Gastrocnemius medialis (tissue), 4 donors: ENCODE measurements at regions of chr2 and their contacts with region 1.

Region 1: GRCh38 chr2:127591221-127591923 is 54.6 kb upstream of the GPR17 start:
- DNase-seq: peak in 1 of 2 donors; percentile 28
- ATAC-seq: peak; percentile 71 to 78
- H3K4me3 ChIP-seq: no peak overlapping the region
- H3K27ac ChIP-seq: no peak overlapping the region
- H3K4me1 ChIP-seq: no peaks in the 10 kb centered on the region
- H3K27me3 ChIP-seq: no peaks in the 10 kb centered on the region
- CTCF ChIP-seq: peak; percentile 71 to 95 (median 74)
- POLR2A ChIP-seq: no peak

Region 2: GRCh38 chr2:127106951-127107621 is 484.3 kb before region 1 on chr2 and contains the start of gene BIN1:
- in situ Hi-C with region 1: no loop called
- intact Hi-C with region 1: no loop called
- DNase-seq: peak; percentile 87 to 96
- ATAC-seq: peak; percentile 56 to 60
- H3K4me3 ChIP-seq: peak within 1 kb of the TSS; percentile 81 to 95 (median 90)
- H3K27ac ChIP-seq: peak within 1 kb of the TSS; percentile 97 to 100 (median 100)
- H3K4me1 ChIP-seq: peaks cover 26 to 44% of the 10 kb centered on the region in 2 donors
- H3K27me3 ChIP-seq: no peaks in the 10 kb centered on the region
- CTCF ChIP-seq: peak in 2 of 5 experiments; percentile 3 to 10
- POLR2A ChIP-seq: peak; percentile 99
- total RNA-seq, gene BIN1: 1,150 to 2,167 (median 1,736) TPM

Region 3: DNA sequence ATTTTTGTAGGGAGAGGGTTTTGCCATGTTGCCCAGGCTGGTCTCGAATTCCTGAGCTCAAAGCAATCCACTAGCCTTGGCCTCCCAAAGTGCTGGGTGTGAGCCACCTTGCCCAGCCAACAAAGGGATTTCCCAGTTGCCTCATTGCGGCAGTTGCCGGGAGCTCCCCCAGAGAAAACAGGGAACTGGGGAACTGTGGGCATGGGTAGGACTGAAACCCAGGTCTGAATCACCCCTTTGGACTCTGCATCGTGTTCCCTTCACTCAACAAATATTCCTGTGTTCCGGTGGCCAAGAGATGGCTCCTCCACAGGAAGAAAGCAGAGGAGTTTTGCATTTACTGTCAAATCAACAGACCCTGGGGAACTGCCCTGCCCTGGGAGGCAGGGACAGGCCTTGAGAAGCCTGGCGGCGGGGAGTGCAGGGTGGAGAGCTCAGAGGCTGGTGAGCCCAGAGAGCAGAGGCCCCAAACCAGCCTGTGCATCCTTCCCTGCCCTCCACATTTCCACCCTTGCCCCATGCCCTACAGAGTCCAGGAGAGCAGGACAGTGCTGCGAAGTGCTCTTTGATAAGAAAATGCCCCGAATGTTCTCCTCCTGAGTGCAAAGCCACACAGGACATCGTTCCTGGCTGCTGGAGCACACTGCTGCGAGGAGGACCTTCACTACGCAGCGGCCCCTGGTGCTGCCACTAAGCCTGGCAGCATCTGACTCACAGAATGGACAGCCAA is 31.0 kb before region 1 on chr2:
- in situ Hi-C with region 1: no loop called
- intact Hi-C with region 1: no loop called
- DNase-seq: no peak
- ATAC-seq: peak; percentile 62 to 65
- H3K4me3 ChIP-seq: no peak overlapping the region
- H3K27ac ChIP-seq: no peak overlapping the region
- H3K4me1 ChIP-seq: peaks cover 0 to 7% of the 10 kb centered on the region in 2 donors
- H3K27me3 ChIP-seq: no peaks in the 10 kb centered on the region
- CTCF ChIP-seq: peak in 1 of 5 experiments; percentile 31
- POLR2A ChIP-seq: no peak

Region 4: GRCh38 chr2:127649684-127650040 is 58.3 kb after region 1 on chr2:
- in situ Hi-C with region 1: no loop called
- intact Hi-C with region 1: loop called (anchors 2 kb)
- DNase-seq: peak; percentile 66 to 67
- ATAC-seq: peak; percentile 81 to 91
- H3K4me3 ChIP-seq: no peak overlapping the region
- H3K27ac ChIP-seq: peak overlapping the region; percentile 29 to 67 (median 59)
- H3K4me1 ChIP-seq: peaks cover 15 to 28% of the 10 kb centered on the region in 2 donors
- H3K27me3 ChIP-seq: no peaks in the 10 kb centered on the region
- CTCF ChIP-seq: peak; percentile 62 to 88 (median 82)
- POLR2A ChIP-seq: no peak

Region 5: DNA sequence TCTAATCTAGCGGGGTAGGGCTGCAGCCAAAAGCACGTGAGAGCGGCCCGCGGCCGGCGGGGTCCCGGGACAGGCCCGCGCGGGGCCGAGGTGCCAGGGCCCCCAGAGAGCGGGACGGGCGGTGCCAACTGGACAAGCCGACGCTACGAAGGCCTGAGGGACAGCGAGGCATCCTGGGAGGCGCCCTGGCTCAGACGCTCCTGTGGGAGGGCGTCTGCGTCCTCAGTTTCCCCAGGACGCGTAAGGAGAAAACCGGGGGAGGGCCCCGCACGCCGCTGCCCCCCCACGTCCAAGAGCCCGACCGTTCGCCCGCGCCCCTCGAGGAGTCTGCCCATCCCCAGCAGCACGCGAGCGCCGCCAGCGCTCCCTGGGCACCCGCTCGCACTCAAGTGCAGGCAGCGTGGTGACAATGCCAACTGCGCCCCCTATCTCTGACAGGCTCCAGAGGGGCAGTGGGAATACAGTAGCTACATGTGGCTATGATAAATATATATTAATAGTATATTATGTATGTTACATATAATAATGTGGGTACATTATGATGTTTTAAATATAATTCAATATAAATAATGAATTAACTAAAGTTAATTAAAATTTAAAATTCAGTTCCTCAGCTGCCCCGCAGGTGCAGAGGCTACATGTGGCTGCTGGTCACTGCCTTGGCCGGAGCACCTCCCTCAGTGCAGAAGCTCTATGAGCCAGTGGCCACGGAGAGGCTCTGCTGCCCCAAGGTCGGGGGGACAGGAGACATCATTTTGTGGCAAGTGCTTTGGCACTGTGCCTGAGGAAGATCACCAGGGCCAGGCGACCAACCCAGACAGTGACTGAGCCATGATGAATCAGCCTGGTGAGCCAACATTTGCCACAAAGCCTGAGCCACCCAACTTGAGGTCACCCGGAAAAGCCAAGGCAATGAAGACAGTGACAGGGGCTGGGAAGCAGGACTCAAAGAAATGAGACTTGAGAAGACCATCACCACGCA is 104.4 kb after region 1 on chr2:
- in situ Hi-C with region 1: no loop called
- intact Hi-C with region 1: loop called (anchors 5 kb)
- DNase-seq: peak in 1 of 2 donors; percentile 61
- ATAC-seq: peak; percentile 20 to 62
- H3K4me3 ChIP-seq: peak overlapping the region; percentile 43 to 67 (median 48)
- H3K27ac ChIP-seq: peak overlapping the region in 2 of 4 donors; percentile 4 to 35
- H3K4me1 ChIP-seq: peaks cover 7% of the 10 kb centered on the region in 2 donors
- H3K27me3 ChIP-seq: no peaks in the 10 kb centered on the region
- CTCF ChIP-seq: peak; percentile 8 to 76 (median 42)
- POLR2A ChIP-seq: no peak